Ascending aorta (tissue), 2 donors: ENCODE measurements at regions of chr6 and their contacts with region 1.

Region 1: GRCh38 chr6:15245361-15246216 is at the start of gene JARID2:
- DNase-seq: peak; percentile 94 to 99
- H3K4me3 ChIP-seq: peak within 1 kb of the TSS; percentile 95 to 96
- H3K27ac ChIP-seq: peak within 1 kb of the TSS; percentile 92 to 94
- H3K4me1 ChIP-seq: peaks cover 0 to 8% of the 10 kb centered on the region in 2 donors
- H3K27me3 ChIP-seq: no peaks in the 10 kb centered on the region
- CTCF ChIP-seq: no peak
- total RNA-seq, gene JARID2: 5.0 TPM

Region 2: GRCh38 chr6:14210663-14211561 is 1034.7 kb before region 1 on chr6:
- intact Hi-C with region 1: loop called (anchors 5 kb)
- DNase-seq: peak; percentile 76 to 95
- H3K4me3 ChIP-seq: peak overlapping the region; percentile 70 to 81
- H3K27ac ChIP-seq: peak overlapping the region; percentile 49
- H3K4me1 ChIP-seq: peaks cover 6 to 11% of the 10 kb centered on the region in 2 donors
- H3K27me3 ChIP-seq: no peaks in the 10 kb centered on the region
- CTCF ChIP-seq: peak in 2 of 3 experiments; percentile 39 to 98

Region 3: DNA sequence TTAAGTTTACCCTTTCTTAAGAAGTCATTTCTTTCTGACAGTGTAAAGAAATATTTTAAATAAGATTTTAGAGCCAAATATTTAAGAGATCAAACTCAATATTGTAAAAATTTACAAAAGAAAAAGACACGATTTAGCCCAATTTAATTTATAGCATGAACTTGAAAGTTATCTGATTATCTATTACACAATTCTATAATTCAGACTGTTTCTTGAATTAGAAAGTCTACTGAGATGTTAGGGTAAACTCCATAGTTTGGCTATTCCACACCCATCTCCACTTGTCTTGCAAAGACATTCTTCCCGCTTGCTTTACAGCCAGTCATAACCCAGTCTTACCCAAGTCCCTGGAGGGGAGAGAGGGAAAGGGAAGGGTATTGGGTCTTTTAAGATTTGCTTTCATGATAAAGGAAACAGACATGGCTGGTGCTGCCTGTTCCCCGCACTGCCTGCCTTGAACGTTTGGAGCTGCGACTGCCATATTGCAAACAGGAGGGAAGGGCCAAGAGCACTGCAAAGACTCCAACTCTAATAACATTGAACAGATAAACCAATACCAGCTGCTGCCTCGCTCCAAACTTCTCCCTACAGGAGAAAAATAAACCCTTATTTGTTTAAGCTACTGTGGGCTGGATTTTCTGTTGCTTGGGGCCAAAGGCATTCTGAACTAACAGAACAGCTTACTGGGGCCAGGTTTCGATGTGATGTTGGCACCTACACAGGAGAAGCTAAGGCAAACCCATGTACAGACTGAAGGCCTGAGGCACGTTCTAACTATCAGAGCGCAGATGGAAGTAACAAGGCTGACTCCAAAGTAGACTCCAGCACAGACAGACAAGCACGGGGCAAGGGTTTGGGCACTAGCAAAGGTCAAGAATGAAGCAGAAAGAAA is 552.0 kb before region 1 on chr6:
- intact Hi-C with region 1: no loop called
- DNase-seq: no peak
- H3K4me3 ChIP-seq: no peak overlapping the region
- H3K27ac ChIP-seq: no peak overlapping the region
- H3K4me1 ChIP-seq: no peaks in the 10 kb centered on the region
- H3K27me3 ChIP-seq: no peaks in the 10 kb centered on the region
- CTCF ChIP-seq: no peak

Region 4: DNA sequence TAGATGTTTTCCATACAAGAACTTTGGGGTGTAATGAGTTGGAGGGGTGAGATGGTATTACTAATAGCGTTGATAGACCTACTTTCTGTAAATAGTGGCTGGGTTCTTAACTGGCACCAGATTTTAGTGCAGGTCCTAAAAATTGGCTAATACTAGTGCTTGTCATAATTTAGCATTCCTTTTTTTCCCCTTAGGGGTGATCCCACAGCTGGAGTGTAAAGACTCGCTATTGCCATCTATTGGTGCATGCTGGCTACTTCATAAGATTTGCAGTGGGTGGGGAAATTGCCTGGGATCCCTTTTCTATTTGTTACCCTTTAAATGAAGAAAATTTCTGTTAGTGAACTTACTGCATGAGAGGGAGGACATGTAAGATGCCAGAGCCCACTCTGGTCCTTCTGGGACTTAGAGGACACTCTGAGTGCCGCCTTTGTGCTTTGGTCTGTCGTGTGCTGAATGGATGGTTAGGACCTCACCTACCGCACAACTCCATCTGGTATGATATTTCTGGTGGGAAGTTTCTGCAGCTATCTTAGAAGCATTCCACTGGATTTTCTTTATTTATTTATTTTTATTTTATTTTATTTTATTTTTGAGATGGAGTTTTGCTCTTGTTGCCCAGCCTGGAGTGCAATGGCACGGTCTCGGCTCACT is 195.8 kb after region 1 on chr6:
- intact Hi-C with region 1: loop called (anchors 2 kb)
- DNase-seq: no peak
- H3K4me3 ChIP-seq: no peak overlapping the region
- H3K27ac ChIP-seq: no peak overlapping the region
- H3K4me1 ChIP-seq: peaks cover 0 to 16% of the 10 kb centered on the region in 2 donors
- H3K27me3 ChIP-seq: no peaks in the 10 kb centered on the region
- CTCF ChIP-seq: peak; percentile 67 to 80 (median 76)

Region 5: DNA sequence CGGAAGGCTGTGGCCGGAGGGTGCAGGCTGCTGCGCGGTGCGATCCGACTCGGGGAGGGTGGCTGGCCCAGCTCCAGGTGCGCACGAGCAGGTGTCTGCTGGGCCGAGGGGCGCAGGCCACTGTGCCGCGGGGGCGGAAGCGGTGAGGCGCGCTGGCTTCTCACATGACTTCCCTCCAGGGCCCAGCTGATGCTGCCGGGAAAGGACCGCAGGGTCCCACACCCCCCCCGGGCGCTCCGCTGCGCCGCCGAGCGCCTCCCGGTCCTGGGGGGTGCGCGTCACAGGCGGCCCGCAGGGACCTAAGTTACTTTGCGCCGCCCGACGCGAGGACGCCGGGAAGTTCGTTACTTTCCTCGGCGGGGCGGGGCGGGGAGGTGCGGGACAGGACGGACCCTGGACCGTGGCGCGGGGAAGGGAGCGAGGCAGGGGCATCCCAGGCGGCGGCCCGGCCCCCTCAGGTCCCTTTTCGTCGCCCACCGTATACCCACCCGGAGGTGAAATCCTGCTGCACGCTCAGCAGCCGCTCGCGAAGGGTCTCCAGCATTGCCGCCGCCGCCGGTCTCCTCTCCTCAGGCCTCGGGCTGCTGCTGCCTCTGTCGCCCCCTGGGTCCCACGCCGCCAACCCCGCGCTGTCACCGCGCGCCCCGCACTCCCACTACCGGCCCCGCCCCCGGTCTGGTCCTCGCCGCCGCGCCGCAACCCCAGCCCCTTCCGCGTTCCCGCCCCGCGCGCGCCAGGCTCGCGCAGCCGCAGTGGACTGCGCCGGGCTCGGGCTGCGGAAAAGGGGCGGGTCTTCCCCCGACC is 416.9 kb after region 1 on chr6 and contains the start of gene DTNBP1:
- intact Hi-C with region 1: loop called (anchors 2 kb)
- DNase-seq: peak in 1 of 2 donors; percentile 91
- H3K4me3 ChIP-seq: peak within 1 kb of the TSS; percentile 70 to 94
- H3K27ac ChIP-seq: peak within 1 kb of the TSS; percentile 64 to 82
- H3K4me1 ChIP-seq: peaks cover 3 to 6% of the 10 kb centered on the region in 2 donors
- H3K27me3 ChIP-seq: no peaks in the 10 kb centered on the region
- CTCF ChIP-seq: no peak
- total RNA-seq, gene DTNBP1: 5.6 TPM

Region 6: GRCh38 chr6:16206595-16207037 is 961.0 kb after region 1 on chr6:
- intact Hi-C with region 1: loop called (anchors 10 kb)
- DNase-seq: peak in 1 of 2 donors; percentile 88
- H3K4me3 ChIP-seq: no peak overlapping the region
- H3K27ac ChIP-seq: peak overlapping the region; percentile 65 to 76
- H3K4me1 ChIP-seq: peaks cover 0 to 21% of the 10 kb centered on the region in 2 donors
- H3K27me3 ChIP-seq: no peaks in the 10 kb centered on the region
- CTCF ChIP-seq: peak; percentile 92 to 96 (median 95)